Breast epithelium (tissue), 4 donors: ENCODE measurements at regions of chr21 and their contacts with region 1.

Region 1: GRCh38 chr21:33128538-33128937 is 58.6 kb downstream of the OLIG1 start:
- DNase-seq: no peak
- H3K4me3 ChIP-seq: no peak overlapping the region
- H3K27ac ChIP-seq: no peak overlapping the region
- H3K4me1 ChIP-seq: no peaks in the 10 kb centered on the region
- H3K27me3 ChIP-seq: peaks cover 0 to 30% of the 10 kb centered on the region in 2 donors
- CTCF ChIP-seq: no peak
- POLR2A ChIP-seq: no peak

Region 2: DNA sequence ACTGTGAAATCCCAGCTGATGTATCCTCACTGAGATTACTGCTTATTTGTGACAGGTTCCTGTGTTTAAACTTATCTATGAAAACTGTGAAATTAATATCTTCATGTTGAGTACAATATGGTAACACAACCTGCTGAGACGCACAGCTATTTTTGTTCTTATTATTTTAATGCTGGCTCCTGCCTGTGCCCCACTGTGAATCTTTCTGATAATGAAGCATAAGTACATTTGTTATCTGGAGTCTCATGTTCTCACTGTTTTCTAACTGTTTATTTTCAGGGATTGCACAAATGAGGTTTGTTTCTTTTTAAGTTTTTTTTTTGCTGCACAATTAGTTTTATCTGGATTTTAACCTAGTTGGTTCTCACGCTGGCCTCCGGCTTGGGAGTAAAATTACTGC is 61.3 kb after region 1 on chr21:
- intact Hi-C with region 1: loop called (anchors 2 kb)
- DNase-seq: no peak
- H3K4me3 ChIP-seq: no peak overlapping the region
- H3K27ac ChIP-seq: no peak overlapping the region
- H3K4me1 ChIP-seq: no peaks in the 10 kb centered on the region
- H3K27me3 ChIP-seq: no peaks in the 10 kb centered on the region
- CTCF ChIP-seq: no peak
- POLR2A ChIP-seq: no peak